Activated B cell treated with CpG ODN at 0.5 μM for 24 hours (primary cell): ENCODE measurements at regions of chr4 and their contacts with region 1.

Region 1: GRCh38 chr4:39181905-39182638 is at the start of gene WDR19:
- DNase-seq: peak; percentile 93
- ATAC-seq: peak; percentile 97
- H3K4me3 Mint-ChIP-seq: no peak within 1 kb of the TSS
- H3K27ac Mint-ChIP-seq: peak within 1 kb of the TSS; percentile 46
- H3K4me1 Mint-ChIP-seq: peaks cover 7% of the 10 kb centered on the region
- H3K27me3 Mint-ChIP-seq: no peaks in the 10 kb centered on the region
- CTCF ChIP-seq: no peak
- total RNA-seq, gene WDR19: 23.8 and 28.4 TPM in 2 replicates

Region 2: GRCh38 chr4:38837849-38838248 is 344.2 kb before region 1 on chr4:
- CTCF ChIA-PET with region 1: no interaction called
- POLR2A ChIA-PET with region 1: no interaction called
- intact Hi-C with region 1: no loop called
- DNase-seq: no peak
- ATAC-seq: peak; percentile 40
- H3K4me3 Mint-ChIP-seq: peak overlapping the region; percentile 21
- H3K27ac Mint-ChIP-seq: peak overlapping the region; percentile 60
- H3K4me1 Mint-ChIP-seq: peaks cover 46% of the 10 kb centered on the region
- H3K27me3 Mint-ChIP-seq: no peaks in the 10 kb centered on the region
- CTCF ChIP-seq: no peak

Region 3: GRCh38 chr4:38902695-38903094 is 279.4 kb before region 1 on chr4:
- CTCF ChIA-PET with region 1: interaction called, 13 read pairs
- POLR2A ChIA-PET with region 1: no interaction called
- intact Hi-C with region 1: loop called (anchors 1 kb)
- DNase-seq: no peak
- ATAC-seq: peak; percentile 71
- H3K4me3 Mint-ChIP-seq: no peak overlapping the region
- H3K27ac Mint-ChIP-seq: no peak overlapping the region
- H3K4me1 Mint-ChIP-seq: peaks cover 2% of the 10 kb centered on the region
- H3K27me3 Mint-ChIP-seq: no peaks in the 10 kb centered on the region
- CTCF ChIP-seq: peak; percentile 45

Region 4: DNA sequence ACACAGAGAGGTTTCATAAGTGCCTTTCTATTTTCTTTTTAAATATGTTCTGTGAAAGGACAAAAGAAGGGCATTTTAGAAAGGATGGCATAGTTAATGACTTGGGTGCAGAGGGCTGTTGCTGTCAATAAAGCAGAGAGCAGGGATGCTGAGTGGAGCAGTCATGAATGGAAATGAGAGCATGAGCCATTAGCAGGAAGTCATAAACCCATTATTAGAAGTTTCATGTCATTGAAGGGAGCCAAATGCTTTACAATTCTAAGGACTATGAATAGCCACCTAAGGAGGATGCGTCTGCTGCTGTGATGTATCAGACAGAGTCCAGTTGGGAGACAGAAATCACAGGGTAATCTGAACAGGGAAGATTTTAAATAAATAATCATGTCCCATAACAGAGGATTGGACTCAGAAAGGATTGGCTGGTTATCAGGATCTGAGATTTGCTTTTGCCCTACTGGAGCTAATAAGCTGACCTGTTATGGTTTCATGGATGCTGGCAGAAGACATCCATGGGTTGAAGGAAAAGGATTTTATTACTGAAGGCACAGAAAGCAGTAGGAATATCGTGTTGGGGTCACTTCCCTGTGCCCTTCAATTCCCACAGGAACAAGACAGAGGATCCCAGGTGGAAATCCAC is 47.3 kb before region 1 on chr4:
- CTCF ChIA-PET with region 1: interaction called, 5 read pairs
- POLR2A ChIA-PET with region 1: no interaction called
- intact Hi-C with region 1: loop called (anchors 1 kb)
- DNase-seq: no peak
- ATAC-seq: no peak
- H3K4me3 Mint-ChIP-seq: no peak overlapping the region
- H3K27ac Mint-ChIP-seq: peak overlapping the region; percentile 4
- H3K4me1 Mint-ChIP-seq: peaks cover 12% of the 10 kb centered on the region
- H3K27me3 Mint-ChIP-seq: no peaks in the 10 kb centered on the region
- CTCF ChIP-seq: no peak

Region 5: GRCh38 chr4:39353478-39354253 is 171.6 kb after region 1 on chr4:
- CTCF ChIA-PET with region 1: no interaction called
- POLR2A ChIA-PET with region 1: no interaction called
- intact Hi-C with region 1: loop called (anchors 5 kb)
- DNase-seq: no peak
- ATAC-seq: peak; percentile 66
- H3K4me3 Mint-ChIP-seq: peak overlapping the region; percentile 69
- H3K27ac Mint-ChIP-seq: peak overlapping the region; percentile 87
- H3K4me1 Mint-ChIP-seq: peaks cover 59% of the 10 kb centered on the region
- H3K27me3 Mint-ChIP-seq: no peaks in the 10 kb centered on the region
- CTCF ChIP-seq: no peak

Region 6: DNA sequence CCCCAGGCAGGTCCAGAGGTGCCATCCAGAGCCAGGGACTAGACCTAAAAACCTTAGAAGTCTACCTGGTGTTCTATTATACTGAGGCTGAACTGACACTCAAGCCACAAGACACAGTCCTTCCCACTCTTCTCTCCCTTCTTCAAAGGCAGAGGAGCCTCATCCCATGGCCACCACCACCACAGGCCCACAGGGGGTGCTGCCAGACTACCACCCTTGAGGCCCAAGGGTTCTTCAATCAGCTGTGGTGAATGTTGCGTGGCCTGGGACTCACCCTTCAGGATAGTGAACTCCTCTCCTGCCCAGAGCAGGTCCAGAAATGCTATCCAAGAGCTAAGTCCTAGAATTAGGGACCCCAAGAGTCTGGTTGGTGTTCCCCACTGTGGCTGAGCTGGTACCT is 201.6 kb after region 1 on chr4:
- CTCF ChIA-PET with region 1: no interaction called
- POLR2A ChIA-PET with region 1: no interaction called
- intact Hi-C with region 1: no loop called
- DNase-seq: no peak
- ATAC-seq: no peak
- H3K4me3 Mint-ChIP-seq: no peak overlapping the region
- H3K27ac Mint-ChIP-seq: no peak overlapping the region
- H3K4me1 Mint-ChIP-seq: no peaks in the 10 kb centered on the region
- H3K27me3 Mint-ChIP-seq: peaks cover 5% of the 10 kb centered on the region
- CTCF ChIP-seq: no peak

Region 7: GRCh38 chr4:39446751-39447573 is 264.9 kb after region 1 on chr4:
- CTCF ChIA-PET with region 1: no interaction called
- POLR2A ChIA-PET with region 1: no interaction called
- intact Hi-C with region 1: loop called (anchors 2 kb)
- DNase-seq: peak; percentile 80
- ATAC-seq: peak; percentile 94
- H3K4me3 Mint-ChIP-seq: peak overlapping the region; percentile 83
- H3K27ac Mint-ChIP-seq: peak overlapping the region; percentile 90
- H3K4me1 Mint-ChIP-seq: peaks cover 27% of the 10 kb centered on the region
- H3K27me3 Mint-ChIP-seq: no peaks in the 10 kb centered on the region
- CTCF ChIP-seq: no peak

Region 8: DNA sequence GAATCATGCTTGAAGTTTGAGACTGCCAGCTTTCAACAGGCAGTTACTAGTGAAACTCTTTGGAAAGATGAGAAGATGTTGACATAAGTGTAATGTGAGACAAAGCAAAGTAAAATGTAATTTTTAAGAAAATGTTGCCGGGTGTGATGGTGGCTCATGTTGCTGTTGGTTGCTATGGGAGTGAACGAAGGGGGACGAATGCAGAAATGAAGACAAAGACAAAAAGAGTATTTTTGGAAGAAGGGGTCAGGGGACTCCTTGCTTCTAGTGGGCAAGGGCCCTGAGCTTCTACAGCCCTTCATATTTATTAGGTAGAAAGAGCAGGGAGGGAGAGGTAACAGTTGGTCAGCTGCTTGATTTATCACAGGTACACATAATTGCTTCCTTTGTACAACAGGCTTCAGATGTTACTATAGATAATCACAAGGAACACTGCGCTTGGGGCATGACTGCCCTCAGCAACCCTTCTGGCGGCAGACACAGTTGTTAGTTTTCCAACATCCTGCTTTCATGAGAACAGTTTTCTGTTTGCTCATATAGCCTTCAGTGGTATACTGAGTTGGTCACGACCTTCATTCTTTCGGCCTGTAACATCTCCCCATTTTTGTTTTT is 357.1 kb after region 1 on chr4:
- CTCF ChIA-PET with region 1: no interaction called
- POLR2A ChIA-PET with region 1: no interaction called
- intact Hi-C with region 1: no loop called
- DNase-seq: no peak
- ATAC-seq: no peak
- H3K4me3 Mint-ChIP-seq: no peak overlapping the region
- H3K27ac Mint-ChIP-seq: no peak overlapping the region
- H3K4me1 Mint-ChIP-seq: no peaks in the 10 kb centered on the region
- H3K27me3 Mint-ChIP-seq: no peaks in the 10 kb centered on the region
- CTCF ChIP-seq: no peak